ENCODE measurements at regions of chr18 and their contacts with region 1.

Region 1: GRCh38 chr18:31648966-31649429 is 35.4 kb downstream of the B4GALT6 start:
- DNase-seq: peak; percentile 85
- ATAC-seq: peak; percentile 77
- H3K4me3 ChIP-seq: peak overlapping the region; percentile 25; the same call in 1 of the 2 replicates
- H3K27ac ChIP-seq: peak overlapping the region; percentile 88
- H3K4me1 ChIP-seq: peaks cover 70% of the 10 kb centered on the region
- H3K27me3 ChIP-seq: no peaks in the 10 kb centered on the region
- CTCF ChIP-seq: no peak
- EP300 ChIP-seq: peak; percentile 65 to 85; a peak in 2 of 4 replicates
- POLR2A ChIP-seq: 0 out of 2 replicates have a peak, but pooled peaks have one; percentile 31
- RAD21 ChIP-seq: peak; percentile 1; the same call in 1 of the 2 replicates

Region 2: GRCh38 chr18:31490387-31490786 is 158.6 kb before region 1 on chr18:
- CTCF ChIA-PET with region 1: no interaction called
- POLR2A ChIA-PET with region 1: no interaction called
- RAD21 ChIA-PET with region 1: no interaction called
- SMC1A ChIA-PET with region 1: no interaction called
- in situ Hi-C with region 1: no loop called
- intact Hi-C with region 1: no loop called
- DNase-seq: peak; percentile 49
- ATAC-seq: peak; percentile 92
- H3K4me3 ChIP-seq: no peak overlapping the region
- H3K27ac ChIP-seq: peak overlapping the region; percentile 9; the same call in 1 of the 2 replicates
- H3K4me1 ChIP-seq: peaks cover 7% of the 10 kb centered on the region
- H3K27me3 ChIP-seq: no peaks in the 10 kb centered on the region
- CTCF ChIP-seq: no peak
- EP300 ChIP-seq: peak; percentile 69 to 85; a peak in 3 of 4 replicates
- POLR2A ChIP-seq: no peak
- RAD21 ChIP-seq: no peak

Region 3: DNA sequence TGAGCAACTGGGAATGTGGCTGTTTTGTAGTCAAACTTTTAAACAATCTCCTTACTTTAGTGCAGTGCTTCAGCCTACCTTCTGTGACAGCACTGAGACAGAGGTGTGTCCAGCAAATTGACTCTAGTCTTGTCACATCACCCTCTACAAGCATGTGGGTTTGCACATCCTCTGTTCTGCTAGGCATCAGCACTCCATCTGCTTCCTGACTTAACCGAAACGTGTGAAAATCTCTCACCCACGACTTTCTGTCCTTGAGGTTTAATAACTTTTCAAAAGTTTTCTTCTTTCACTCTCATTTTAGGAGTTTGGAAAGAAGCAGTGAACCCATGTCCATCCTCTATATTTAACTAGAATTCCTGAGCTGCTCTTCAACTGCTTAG is 14.7 kb before region 1 on chr18:
- CTCF ChIA-PET with region 1: interaction called, 34 read pairs
- POLR2A ChIA-PET with region 1: interaction called, 14 read pairs
- RAD21 ChIA-PET with region 1: interaction called, 19 read pairs
- SMC1A ChIA-PET with region 1: interaction called, 81 read pairs
- in situ Hi-C with region 1: no loop called
- intact Hi-C with region 1: no loop called
- DNase-seq: peak; percentile 85
- ATAC-seq: peak; percentile 98
- H3K4me3 ChIP-seq: no peak overlapping the region
- H3K27ac ChIP-seq: peak overlapping the region; percentile 70
- H3K4me1 ChIP-seq: peaks cover 35% of the 10 kb centered on the region
- H3K27me3 ChIP-seq: no peaks in the 10 kb centered on the region
- CTCF ChIP-seq: no peak
- EP300 ChIP-seq: peak in 1 of 2 experiments; percentile 51; a peak in 1 of 4 replicates
- POLR2A ChIP-seq: no peak
- RAD21 ChIP-seq: peak; percentile 22; the same call in 1 of the 2 replicates

Region 4: GRCh38 chr18:31679133-31679731 is 30.2 kb after region 1 on chr18:
- CTCF ChIA-PET with region 1: interaction called, 135 read pairs
- POLR2A ChIA-PET with region 1: interaction called, 28 read pairs
- RAD21 ChIA-PET with region 1: interaction called, 168 read pairs
- SMC1A ChIA-PET with region 1: interaction called, 169 read pairs
- in situ Hi-C with region 1: no loop called
- intact Hi-C with region 1: loop called (anchors 2 kb)
- DNase-seq: no peak
- ATAC-seq: no peak
- H3K4me3 ChIP-seq: peak overlapping the region; percentile 100
- H3K27ac ChIP-seq: peak overlapping the region; percentile 49; the same call in 1 of the 2 replicates
- H3K4me1 ChIP-seq: peaks cover 23% of the 10 kb centered on the region
- H3K27me3 ChIP-seq: no peaks in the 10 kb centered on the region
- CTCF ChIP-seq: no peak
- EP300 ChIP-seq: no peak
- POLR2A ChIP-seq: no peak
- RAD21 ChIP-seq: no peak

Region 5: DNA sequence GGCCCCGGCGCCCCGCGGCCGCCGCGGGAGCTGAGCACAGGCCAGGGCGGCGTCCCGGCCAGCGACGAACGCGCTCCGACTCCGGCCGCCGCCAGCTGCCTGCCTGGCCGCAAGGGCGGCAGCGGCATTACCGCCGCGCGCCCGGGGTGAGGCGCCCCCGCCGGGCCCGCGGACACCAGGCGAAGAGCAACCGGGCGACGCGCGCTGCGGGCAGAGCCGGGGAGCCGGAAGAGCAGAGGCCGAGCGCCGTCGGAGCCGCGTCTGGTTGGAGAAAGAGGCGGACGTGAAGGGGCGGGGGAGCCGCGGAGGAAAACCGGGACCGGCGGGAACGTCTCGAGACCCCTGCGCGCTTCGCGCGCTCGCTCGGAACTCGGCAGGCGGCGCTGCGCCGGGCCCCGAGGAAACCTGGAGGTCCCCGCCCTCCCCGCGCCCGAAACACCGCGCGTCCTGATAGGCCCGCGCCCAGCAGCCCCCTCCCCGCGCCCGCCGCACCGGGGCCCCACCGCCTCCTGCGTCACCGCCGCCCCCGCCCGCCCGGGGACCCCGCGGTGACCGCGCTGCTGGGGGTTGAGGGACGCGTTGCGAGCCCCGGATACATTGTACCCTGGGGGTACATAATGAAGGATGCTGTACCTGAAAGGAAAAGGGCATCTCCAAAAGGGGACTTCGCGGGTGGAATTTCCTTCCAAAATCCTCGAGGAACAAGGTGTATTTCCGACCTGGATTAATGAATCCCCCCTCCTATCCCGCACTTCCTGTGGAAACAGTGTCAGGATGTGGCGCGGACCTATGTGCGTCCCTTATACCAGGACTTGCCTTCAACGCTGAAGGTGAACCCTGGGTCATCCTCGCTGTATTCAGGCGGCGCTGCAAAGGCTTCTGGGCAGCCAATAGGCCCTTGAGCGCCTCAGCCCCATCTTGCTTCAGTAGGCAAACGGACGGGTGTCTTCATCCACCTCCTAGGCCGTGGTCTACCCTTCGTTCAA is 36.4 kb after region 1 on chr18:
- CTCF ChIA-PET with region 1: interaction called, 135 read pairs
- POLR2A ChIA-PET with region 1: interaction called, 28 read pairs
- RAD21 ChIA-PET with region 1: interaction called, 168 read pairs
- SMC1A ChIA-PET with region 1: interaction called, 169 read pairs
- in situ Hi-C with region 1: no loop called
- intact Hi-C with region 1: loop called (anchors 2 kb)
- DNase-seq: peak; percentile 40
- ATAC-seq: peak; percentile 71
- H3K4me3 ChIP-seq: peak overlapping the region; percentile 75
- H3K27ac ChIP-seq: peak overlapping the region; percentile 88
- H3K4me1 ChIP-seq: peaks cover 13% of the 10 kb centered on the region
- H3K27me3 ChIP-seq: no peaks in the 10 kb centered on the region
- CTCF ChIP-seq: peak; percentile 42 to 48 (median 47); a peak in 4 of 6 replicates
- EP300 ChIP-seq: no peak
- POLR2A ChIP-seq: peak; percentile 79
- RAD21 ChIP-seq: 0 out of 2 replicates have a peak, but pooled peaks have one; percentile 15

Region 6: DNA sequence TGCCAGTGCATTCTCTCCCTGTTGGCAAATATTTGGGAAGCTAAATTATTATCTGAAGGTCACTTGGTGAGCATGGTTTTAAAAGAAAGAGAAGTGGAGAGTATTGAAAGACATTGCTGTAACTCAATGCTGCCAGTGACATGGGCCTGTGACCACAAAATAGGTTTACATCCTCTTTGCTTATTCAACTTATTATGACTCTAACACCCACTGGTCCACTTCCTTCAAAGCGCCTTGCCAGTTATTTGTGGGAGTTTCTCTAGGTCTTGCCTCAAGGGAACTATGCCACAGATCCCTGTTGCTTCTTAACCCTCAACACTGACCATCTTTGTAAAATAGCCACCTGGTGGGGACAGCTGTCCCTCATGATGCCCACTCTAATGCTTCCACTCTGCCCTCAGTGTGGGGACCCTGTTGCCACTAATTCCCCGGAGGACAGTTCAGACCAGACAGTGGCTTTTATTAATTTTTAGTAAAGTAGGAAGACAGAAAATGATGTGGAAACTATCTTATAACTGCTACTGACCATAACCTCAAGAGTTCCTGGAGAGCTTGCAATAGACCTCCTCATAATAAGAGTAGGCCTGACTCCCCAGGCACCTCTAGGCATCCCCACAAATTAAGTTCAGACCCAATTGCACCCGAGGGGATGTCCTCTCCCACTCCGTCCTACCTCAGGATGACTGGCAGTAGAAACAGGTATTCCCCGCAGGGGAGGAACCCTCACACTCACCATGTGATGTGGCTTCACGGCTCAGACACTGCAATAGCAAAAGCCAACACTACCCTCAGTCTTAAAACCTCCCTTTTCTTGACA is 143.0 kb after region 1 on chr18:
- CTCF ChIA-PET with region 1: no interaction called
- POLR2A ChIA-PET with region 1: no interaction called
- RAD21 ChIA-PET with region 1: interaction called, 6 read pairs
- SMC1A ChIA-PET with region 1: no interaction called
- in situ Hi-C with region 1: no loop called
- intact Hi-C with region 1: loop called (anchors 5 kb)
- DNase-seq: peak; percentile 76
- ATAC-seq: peak; percentile 92
- H3K4me3 ChIP-seq: no peak overlapping the region
- H3K27ac ChIP-seq: peak overlapping the region; percentile 58; the same call in 1 of the 2 replicates
- H3K4me1 ChIP-seq: peaks cover 21% of the 10 kb centered on the region
- H3K27me3 ChIP-seq: no peaks in the 10 kb centered on the region
- CTCF ChIP-seq: no peak
- EP300 ChIP-seq: peak; percentile 50 to 82; a peak in 3 of 4 replicates
- POLR2A ChIP-seq: no peak
- RAD21 ChIP-seq: no peak